H1 (cell line): ENCODE measurements at regions of chr5 and their contacts with region 1.

Region 1: DNA sequence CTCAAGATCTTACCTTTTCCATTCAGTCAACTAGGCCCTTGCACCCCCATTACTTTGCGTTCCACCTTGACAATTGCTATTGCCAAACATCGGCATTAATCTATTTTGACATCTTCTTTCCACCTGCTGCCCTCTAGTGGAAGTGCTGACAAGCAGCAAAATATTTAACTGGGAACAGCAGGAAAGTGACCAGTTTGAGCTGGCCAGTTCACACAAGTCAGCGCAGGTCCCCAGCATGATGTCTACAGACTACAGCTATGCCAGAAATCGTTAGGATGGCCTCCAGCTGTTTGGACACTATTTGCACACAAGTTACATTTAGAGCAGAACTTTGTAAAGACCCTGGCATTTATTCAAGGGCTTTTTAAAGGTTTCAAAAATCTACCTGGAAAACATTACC is 160.1 kb downstream of the GHR start:
- DNase-seq: peak in 1 of 2 experiments; percentile 54
- H3K4me3 ChIP-seq: no peak overlapping the region
- H3K27ac ChIP-seq: no peak overlapping the region
- H3K4me1 ChIP-seq: peaks cover 0 to 3% (median 0%) of the 10 kb centered on the region in 4 experiments; a peak in 1 of 7 replicates
- H3K27me3 ChIP-seq: no peaks in the 10 kb centered on the region
- CTCF ChIP-seq: peak; percentile 16 to 86 (median 76)
- EP300 ChIP-seq: no peak
- POLR2A ChIP-seq: no peak
- RAD21 ChIP-seq: peak; percentile 85 to 90

Region 2: GRCh38 chr5:42423285-42424165 is 159.8 kb before region 1 on chr5 and contains the start of gene GHR:
- CTCF ChIA-PET with region 1: interaction called, 26 read pairs
- POLR2A ChIA-PET with region 1: no interaction called
- DNase-seq: peak; percentile 67 to 83
- H3K4me3 ChIP-seq: peak within 1 kb of the TSS; percentile 47 to 78 (median 53)
- H3K27ac ChIP-seq: no peak within 1 kb of the TSS
- H3K4me1 ChIP-seq: peaks cover 0 to 10% (median 4%) of the 10 kb centered on the region in 4 experiments; a peak in 4 of 7 replicates
- H3K27me3 ChIP-seq: peaks cover 0 to 19% (median 16%) of the 10 kb centered on the region in 4 experiments; a peak in 6 of 7 replicates
- CTCF ChIP-seq: peak; percentile 60 to 82 (median 64)
- EP300 ChIP-seq: no peak
- POLR2A ChIP-seq: no peak
- RAD21 ChIP-seq: peak; percentile 58 to 69
- total RNA-seq, gene GHR: 0.19 and 0.27 TPM in 2 replicates

Region 3: DNA sequence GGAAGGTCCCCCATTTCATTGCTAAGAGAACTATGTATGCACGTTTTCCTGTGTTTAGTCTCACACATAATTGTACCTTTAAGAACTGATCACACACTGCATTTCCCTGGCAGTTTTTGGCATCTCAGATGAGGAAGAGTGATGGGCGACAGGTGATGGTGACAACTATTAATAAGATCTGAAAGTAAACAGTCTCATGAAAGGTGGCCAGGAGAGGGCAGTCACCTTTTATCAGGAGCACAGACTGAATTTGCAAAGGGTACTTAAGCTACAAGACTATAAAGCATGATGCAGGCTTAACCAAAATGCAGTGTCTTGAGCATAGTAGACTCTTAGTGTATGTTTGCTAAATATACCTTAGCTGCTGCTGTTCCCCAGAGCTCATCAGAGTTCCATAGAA is 68.6 kb before region 1 on chr5:
- CTCF ChIA-PET with region 1: interaction called, 21 read pairs
- POLR2A ChIA-PET with region 1: no interaction called
- DNase-seq: no peak
- H3K4me3 ChIP-seq: no peak overlapping the region
- H3K27ac ChIP-seq: no peak overlapping the region
- H3K4me1 ChIP-seq: no peaks in the 10 kb centered on the region
- H3K27me3 ChIP-seq: no peaks in the 10 kb centered on the region
- CTCF ChIP-seq: peak in 2 of 3 experiments; percentile 41 to 59; a peak in 3 of 4 replicates
- EP300 ChIP-seq: no peak
- POLR2A ChIP-seq: no peak
- RAD21 ChIP-seq: peak; percentile 53 to 57

Region 4: DNA sequence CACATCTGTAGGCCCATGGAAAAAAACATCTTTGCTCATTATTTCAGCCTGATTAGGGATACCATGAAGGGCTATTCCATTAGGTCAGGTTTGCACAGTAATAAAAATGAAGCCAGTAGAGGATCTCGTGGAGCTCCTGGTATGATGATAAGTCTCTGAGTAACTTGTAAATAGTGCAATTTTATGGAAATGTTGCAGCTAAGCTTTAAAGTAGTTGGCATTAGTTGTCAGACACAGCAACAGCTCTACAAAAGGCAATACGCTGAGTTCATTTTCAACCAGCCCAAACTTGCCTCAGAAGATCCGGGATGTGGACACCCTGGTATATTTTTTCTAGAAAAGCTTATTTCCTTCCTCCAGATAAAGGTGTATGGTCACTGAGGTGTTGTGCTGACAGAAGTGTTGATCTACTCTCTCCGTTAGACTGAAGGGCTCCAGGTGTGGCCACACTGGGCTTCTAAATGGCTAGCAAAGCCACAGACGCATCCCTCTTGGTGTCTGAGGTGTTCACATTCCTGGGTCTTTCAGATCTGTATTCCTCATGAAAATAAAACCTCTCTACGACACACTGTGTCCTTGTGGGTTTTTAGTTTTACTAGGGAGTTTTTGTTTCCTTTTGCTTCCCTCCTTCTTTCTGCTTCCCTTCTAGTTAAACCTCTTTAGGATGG is 18.5 kb before region 1 on chr5:
- CTCF ChIA-PET with region 1: interaction called, 16 read pairs
- POLR2A ChIA-PET with region 1: no interaction called
- DNase-seq: no peak
- H3K4me3 ChIP-seq: no peak overlapping the region
- H3K27ac ChIP-seq: no peak overlapping the region
- H3K4me1 ChIP-seq: no peaks in the 10 kb centered on the region
- H3K27me3 ChIP-seq: no peaks in the 10 kb centered on the region
- CTCF ChIP-seq: no peak
- EP300 ChIP-seq: no peak
- POLR2A ChIP-seq: no peak
- RAD21 ChIP-seq: no peak

Region 5: GRCh38 chr5:42570966-42571960 is 12.1 kb before region 1 on chr5:
- CTCF ChIA-PET with region 1: interaction called, 16 read pairs
- POLR2A ChIA-PET with region 1: no interaction called
- DNase-seq: no peak
- H3K4me3 ChIP-seq: no peak overlapping the region
- H3K27ac ChIP-seq: no peak overlapping the region
- H3K4me1 ChIP-seq: no peaks in the 10 kb centered on the region
- H3K27me3 ChIP-seq: no peaks in the 10 kb centered on the region
- CTCF ChIP-seq: no peak
- EP300 ChIP-seq: no peak
- POLR2A ChIP-seq: no peak
- RAD21 ChIP-seq: no peak

Region 6: DNA sequence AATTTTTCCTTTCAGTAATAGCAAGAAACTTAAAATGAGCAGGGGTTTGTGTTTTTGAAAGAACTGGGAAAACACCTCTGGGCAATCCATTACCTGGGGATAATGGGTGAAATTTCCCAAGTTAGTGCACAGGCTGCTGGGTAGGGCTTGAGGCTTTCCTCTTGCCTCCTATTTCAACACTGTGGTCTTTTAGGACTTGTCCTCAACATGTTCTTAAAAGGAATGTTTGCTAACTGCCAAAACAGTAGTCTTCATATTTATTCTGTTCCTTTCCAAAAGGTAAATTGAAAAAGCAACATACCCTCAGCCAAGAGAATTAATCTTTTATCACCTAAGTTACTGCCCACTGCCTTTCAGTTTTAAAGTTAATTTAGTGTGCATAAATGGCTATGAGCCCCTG is 15.0 kb after region 1 on chr5:
- CTCF ChIA-PET with region 1: interaction called, 26 read pairs
- POLR2A ChIA-PET with region 1: no interaction called
- DNase-seq: no peak
- H3K4me3 ChIP-seq: no peak overlapping the region
- H3K27ac ChIP-seq: no peak overlapping the region
- H3K4me1 ChIP-seq: no peaks in the 10 kb centered on the region
- H3K27me3 ChIP-seq: no peaks in the 10 kb centered on the region
- CTCF ChIP-seq: no peak
- EP300 ChIP-seq: no peak
- POLR2A ChIP-seq: no peak
- RAD21 ChIP-seq: no peak

Region 7: DNA sequence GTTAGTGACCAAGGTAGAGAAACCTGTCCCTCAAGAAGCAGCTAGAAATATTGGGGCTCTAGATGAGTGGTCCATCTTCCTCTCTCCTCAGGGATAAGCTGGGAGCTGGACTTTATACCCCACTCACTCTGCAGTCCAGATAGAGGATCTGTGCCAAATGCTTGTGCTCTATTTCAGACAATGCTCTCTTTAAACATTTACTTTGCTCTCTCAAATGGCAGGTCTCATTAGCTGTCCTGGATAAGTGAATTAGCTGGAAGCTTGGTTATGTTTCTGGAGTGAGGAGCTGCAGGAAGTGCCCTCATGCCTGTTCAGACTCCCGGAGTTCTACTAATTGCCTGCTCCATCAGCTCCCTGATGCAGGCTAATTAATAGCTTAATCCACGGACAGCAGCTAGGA is 22.2 kb after region 1 on chr5:
- CTCF ChIA-PET with region 1: interaction called, 13 read pairs
- POLR2A ChIA-PET with region 1: no interaction called
- DNase-seq: no peak
- H3K4me3 ChIP-seq: no peak overlapping the region
- H3K27ac ChIP-seq: no peak overlapping the region
- H3K4me1 ChIP-seq: no peaks in the 10 kb centered on the region
- H3K27me3 ChIP-seq: no peaks in the 10 kb centered on the region
- CTCF ChIP-seq: no peak
- EP300 ChIP-seq: no peak
- POLR2A ChIP-seq: no peak
- RAD21 ChIP-seq: no peak

Region 8: GRCh38 chr5:42624912-42625311 is 41.6 kb after region 1 on chr5:
- CTCF ChIA-PET with region 1: no interaction called
- POLR2A ChIA-PET with region 1: no interaction called
- DNase-seq: no peak
- H3K4me3 ChIP-seq: no peak overlapping the region
- H3K27ac ChIP-seq: no peak overlapping the region
- H3K4me1 ChIP-seq: peaks cover 0 to 4% (median 0%) of the 10 kb centered on the region in 4 experiments; a peak in 1 of 7 replicates
- H3K27me3 ChIP-seq: no peaks in the 10 kb centered on the region
- CTCF ChIP-seq: no peak
- EP300 ChIP-seq: no peak
- POLR2A ChIP-seq: no peak
- RAD21 ChIP-seq: no peak

Region 9: DNA sequence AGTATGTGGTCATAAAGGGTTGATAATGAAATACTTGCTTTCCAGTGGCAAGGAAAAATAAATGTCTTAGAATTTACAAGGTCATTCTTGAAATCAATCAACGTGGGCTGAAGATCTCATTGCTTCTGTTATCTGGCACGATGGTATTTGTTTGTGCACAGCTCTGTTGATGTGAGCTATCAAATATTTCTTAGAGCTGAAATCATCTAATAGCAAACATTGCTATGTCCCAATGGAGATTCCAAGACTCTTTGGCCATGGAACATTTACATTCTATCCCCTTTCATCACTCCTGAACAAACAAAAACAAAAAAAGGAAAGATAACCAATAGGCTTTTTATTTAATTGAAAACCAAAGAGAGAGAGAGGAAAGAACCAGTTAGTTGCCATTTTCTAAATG is 61.8 kb after region 1 on chr5:
- CTCF ChIA-PET with region 1: no interaction called
- POLR2A ChIA-PET with region 1: no interaction called
- DNase-seq: no peak
- H3K4me3 ChIP-seq: no peak overlapping the region
- H3K27ac ChIP-seq: no peak overlapping the region
- H3K4me1 ChIP-seq: no peaks in the 10 kb centered on the region
- H3K27me3 ChIP-seq: no peaks in the 10 kb centered on the region
- CTCF ChIP-seq: no peak
- EP300 ChIP-seq: no peak
- POLR2A ChIP-seq: no peak
- RAD21 ChIP-seq: no peak

Region 10: GRCh38 chr5:42842921-42843641 is 259.8 kb after region 1 on chr5:
- CTCF ChIA-PET with region 1: no interaction called
- POLR2A ChIA-PET with region 1: no interaction called
- DNase-seq: no peak
- H3K4me3 ChIP-seq: no peak overlapping the region
- H3K27ac ChIP-seq: no peak overlapping the region
- H3K4me1 ChIP-seq: no peaks in the 10 kb centered on the region
- H3K27me3 ChIP-seq: no peaks in the 10 kb centered on the region; a peak in 1 of 7 replicates
- CTCF ChIP-seq: no peak
- EP300 ChIP-seq: no peak
- POLR2A ChIP-seq: no peak
- RAD21 ChIP-seq: no peak